Common myeloid progenitor, CD34-positive (primary cell): ENCODE measurements at regions of chr16 and their contacts with region 1.

Region 1: DNA sequence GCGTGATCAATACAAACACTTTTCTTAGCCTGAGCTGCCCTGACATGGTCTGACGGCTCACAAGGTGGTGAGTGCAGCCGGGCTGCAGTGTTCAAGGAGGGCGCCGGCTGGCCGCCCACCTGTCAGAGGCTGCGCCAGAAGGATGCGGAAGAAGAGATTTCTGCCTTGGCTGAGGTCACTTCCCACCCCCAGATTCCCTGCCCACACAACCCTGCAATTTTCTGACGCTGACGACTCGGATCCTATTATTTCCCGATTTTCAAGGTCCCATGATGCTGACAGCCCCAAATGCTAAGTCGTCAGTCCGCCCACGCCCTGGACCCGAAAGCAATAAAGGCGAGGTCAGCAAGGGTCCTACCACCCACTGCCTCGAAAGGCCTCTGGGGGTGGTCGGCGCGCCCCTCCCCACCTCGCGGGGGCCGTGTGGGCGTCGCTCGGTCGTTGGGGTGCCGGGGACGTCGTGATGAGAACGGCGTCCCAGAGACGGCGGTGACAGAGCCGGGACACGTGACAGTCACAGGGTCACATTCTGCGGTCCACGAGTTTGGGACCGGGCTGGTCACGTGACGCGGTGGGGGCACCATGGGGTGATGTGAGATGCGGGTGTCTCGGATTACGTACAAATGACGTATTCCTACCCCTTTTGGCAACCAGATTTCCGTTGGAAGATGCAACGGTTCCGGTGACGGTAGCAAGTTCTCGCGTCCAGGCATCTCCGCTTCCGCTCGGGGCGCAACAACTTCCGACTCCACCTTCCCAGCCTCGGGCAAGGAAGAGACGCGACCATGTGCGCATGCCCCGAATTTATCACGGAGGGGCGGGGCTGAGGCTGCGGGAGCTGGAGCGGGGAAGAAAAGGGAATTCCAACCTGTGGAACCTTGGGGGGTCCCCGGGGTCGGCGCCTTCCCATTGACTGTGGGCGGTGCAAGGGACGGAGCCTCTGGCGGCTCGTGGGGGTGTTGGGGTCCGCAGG is at the start of gene STX4:
- DNase-seq: peak; percentile 100
- H3K4me3 ChIP-seq: peak within 1 kb of the TSS; percentile 79 to 100 (median 94)
- H3K27ac ChIP-seq: peak within 1 kb of the TSS; percentile 96 to 97
- H3K4me1 ChIP-seq: peaks cover 3 to 26% (median 21%) of the 10 kb centered on the region in 4 experiments
- H3K27me3 ChIP-seq: no peaks in the 10 kb centered on the region

Region 2: GRCh38 chr16:31073968-31074813 is 41.2 kb after region 1 on chr16 and contains the starts of genes ZNF646 and ZNF668:
- CTCF ChIA-PET with region 1: interaction called, 3 read pairs
- POLR2A ChIA-PET with region 1: interaction called, 12 read pairs
- DNase-seq: peak; percentile 100
- H3K4me3 ChIP-seq: peak within 1 kb of the TSS; percentile 93 to 100 (median 97)
- H3K27ac ChIP-seq: peak within 1 kb of the TSS; percentile 97 to 99
- H3K4me1 ChIP-seq: peaks cover 12 to 34% (median 24%) of the 10 kb centered on the region in 4 experiments
- H3K27me3 ChIP-seq: no peaks in the 10 kb centered on the region